ENCODE measurements at regions of chr5 and their contacts with region 1.

Region 1: DNA sequence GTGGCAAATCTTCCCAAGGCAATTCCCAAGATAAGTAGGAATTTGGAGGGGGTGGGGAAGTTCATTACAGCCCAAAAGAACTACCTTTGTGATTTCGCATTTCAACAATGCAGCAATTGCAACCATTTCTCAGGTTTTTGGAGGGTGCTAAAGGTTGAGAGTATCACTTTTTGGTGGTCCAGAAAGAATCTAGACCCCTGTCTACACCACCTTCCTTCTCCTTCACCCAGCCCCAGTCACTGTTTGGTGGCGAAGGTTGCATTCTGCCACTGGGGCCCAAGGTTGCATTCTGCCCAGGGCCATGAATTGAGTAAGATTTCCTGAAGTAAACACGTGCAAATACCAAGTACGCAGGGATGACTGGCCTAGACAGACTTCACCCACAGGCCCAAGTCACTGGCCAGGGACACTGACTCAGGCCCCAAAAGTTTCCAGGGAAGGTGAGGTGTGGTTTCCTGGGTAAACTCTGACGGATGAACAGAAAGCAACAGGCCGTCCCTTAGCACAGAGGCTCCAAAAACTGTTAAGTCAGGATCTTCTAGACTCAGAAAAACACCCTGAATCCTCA is 5.7 kb downstream of the PDE6A start:
- DNase-seq: peak; percentile 77
- H3K4me3 ChIP-seq: no peak overlapping the region
- H3K27ac ChIP-seq: peak overlapping the region; percentile 88
- H3K4me1 ChIP-seq: peaks cover 33% of the 10 kb centered on the region
- H3K27me3 ChIP-seq: no peaks in the 10 kb centered on the region
- CTCF ChIP-seq: no peak
- POLR2A ChIP-seq: no peak

Region 2: GRCh38 chr5:149902177-149902576 is 36.7 kb before region 1 on chr5:
- CTCF ChIA-PET with region 1: interaction called, 4 read pairs
- POLR2A ChIA-PET with region 1: no interaction called
- dilution Hi-C with region 1: no loop called
- intact Hi-C with region 1: loop called (anchors 5 kb)
- DNase-seq: peak; percentile 19
- H3K4me3 ChIP-seq: no peak overlapping the region
- H3K27ac ChIP-seq: no peak overlapping the region
- H3K4me1 ChIP-seq: peaks cover 9% of the 10 kb centered on the region
- H3K27me3 ChIP-seq: no peaks in the 10 kb centered on the region
- CTCF ChIP-seq: peak in 1 of 2 donors; percentile 27
- POLR2A ChIP-seq: no peak

Region 3: DNA sequence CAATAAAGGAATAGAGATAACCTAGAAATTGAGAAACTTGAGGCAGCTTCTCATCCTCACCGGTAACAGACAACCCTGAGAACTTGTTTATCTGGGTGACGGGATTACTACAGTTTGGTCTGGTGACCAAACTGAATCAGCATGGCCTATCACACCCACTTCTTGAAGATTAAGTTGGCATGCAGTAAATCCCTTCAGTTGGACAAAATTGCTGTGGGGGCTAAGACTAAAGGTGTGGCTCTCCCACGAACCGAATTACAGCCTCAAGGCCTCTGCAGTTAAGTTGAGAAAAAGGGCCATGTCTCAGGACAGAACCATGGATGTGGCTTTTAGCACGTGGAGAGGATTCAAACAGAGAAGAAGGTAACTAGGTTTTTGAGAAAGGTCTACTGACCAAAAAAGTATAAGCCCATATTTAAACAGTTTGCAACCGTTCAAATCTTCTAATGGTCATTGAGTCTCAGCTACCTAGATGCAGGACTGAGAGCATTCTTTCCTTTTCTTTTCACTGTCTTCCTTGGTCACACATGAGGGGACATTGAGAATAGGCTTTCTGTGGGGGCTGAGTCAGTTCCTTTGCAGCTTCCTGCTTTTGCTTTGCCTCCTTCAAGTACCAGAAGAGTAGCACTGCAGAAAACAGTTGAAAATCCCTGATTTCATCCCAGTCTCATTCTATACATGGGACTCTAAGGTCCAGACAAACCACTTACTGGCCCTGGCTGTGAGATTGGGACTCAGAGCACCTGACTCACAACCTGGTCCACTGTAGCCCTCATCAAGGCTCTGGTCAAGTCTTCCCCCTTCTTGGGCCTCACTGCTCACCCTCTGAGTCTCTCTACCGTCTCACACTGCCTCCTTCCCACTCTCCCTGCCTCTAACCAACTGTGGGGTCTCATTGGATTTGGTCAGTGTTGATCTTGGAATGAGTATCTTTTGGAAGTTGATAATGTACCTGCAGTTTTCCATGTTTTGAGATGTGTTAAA is 25.1 kb before region 1 on chr5:
- CTCF ChIA-PET with region 1: no interaction called
- POLR2A ChIA-PET with region 1: no interaction called
- dilution Hi-C with region 1: no loop called
- intact Hi-C with region 1: loop called (anchors 2 kb)
- DNase-seq: peak; percentile 61
- H3K4me3 ChIP-seq: no peak overlapping the region
- H3K27ac ChIP-seq: peak overlapping the region; percentile 10
- H3K4me1 ChIP-seq: peaks cover 28% of the 10 kb centered on the region
- H3K27me3 ChIP-seq: no peaks in the 10 kb centered on the region
- CTCF ChIP-seq: no peak
- POLR2A ChIP-seq: no peak